BJ (cell line): ENCODE measurements at regions of chr10 and their contacts with region 1.

Region 1: GRCh38 chr10:26725837-26726727 is 28.6 kb downstream of the PDSS1 start:
- DNase-seq: no peak
- H3K4me3 ChIP-seq: no peak overlapping the region
- H3K27me3 ChIP-seq: no peaks in the 10 kb centered on the region
- CTCF ChIP-seq: peak; percentile 76

Region 2: DNA sequence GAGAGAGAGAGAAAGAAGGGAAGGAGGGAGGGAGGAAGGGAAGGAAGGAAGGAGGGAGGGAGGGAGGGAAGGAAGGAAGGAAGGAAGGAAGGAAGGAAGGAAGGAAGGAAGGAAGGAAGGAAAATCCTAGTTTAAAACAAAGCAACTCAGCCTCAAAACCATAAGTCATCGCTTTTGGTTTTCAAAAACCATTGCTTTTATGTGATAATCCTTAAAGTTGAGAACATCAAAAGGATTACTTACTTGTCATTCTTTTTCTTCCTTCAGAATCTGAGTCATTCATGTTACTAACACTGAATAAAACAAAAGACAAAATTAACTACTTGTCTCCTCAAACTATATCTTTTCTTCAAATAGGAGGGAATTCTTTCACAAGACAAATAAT is 50.2 kb before region 1 on chr10:
- CTCF ChIA-PET with region 1: no interaction called
- POLR2A ChIA-PET with region 1: no interaction called
- DNase-seq: no peak
- H3K4me3 ChIP-seq: no peak overlapping the region
- H3K27me3 ChIP-seq: no peaks in the 10 kb centered on the region
- CTCF ChIP-seq: no peak

Region 3: GRCh38 chr10:26737730-26738129 is 11.6 kb after region 1 on chr10:
- CTCF ChIA-PET with region 1: interaction called, 21 read pairs
- POLR2A ChIA-PET with region 1: no interaction called
- DNase-seq: no peak
- H3K4me3 ChIP-seq: no peak overlapping the region
- H3K27me3 ChIP-seq: no peaks in the 10 kb centered on the region
- CTCF ChIP-seq: no peak

Region 4: DNA sequence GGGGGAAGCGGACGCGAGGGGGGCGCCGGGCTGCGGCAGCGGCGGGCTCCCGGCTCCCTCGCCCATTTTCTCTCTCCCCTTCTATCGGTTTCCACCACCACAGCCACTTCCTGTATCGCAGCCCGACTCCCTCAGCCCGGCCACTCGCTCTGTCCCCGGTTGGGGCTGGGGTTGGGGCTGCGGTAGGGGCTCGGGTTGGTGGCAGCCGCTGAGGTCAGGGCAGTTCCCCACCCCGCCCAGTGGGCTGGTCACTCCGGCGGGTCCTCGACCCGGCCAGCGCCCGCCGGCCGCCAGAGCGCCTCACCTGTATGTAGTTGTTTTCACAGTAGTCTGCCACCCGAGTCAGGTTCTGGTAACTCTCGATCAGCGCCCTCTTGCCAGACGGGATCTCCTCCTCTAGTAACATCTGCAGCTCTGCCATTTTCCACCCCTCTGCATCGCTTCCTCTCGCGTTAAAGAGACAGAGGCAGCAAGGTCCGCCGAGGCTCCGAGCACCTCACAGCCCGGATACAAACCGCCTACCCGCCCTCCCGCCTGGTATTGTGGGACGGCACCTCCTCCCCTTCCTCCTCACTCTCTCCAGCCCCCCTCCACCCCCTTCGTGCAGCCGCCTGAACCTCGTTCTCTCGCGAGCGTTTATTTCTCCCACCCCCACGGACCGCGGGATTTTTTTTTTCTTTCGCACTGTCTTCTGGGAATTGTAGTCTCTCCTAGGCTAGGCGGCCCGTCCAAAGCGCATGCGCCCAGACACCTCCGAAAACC is 134.5 kb after region 1 on chr10 and contains the start of gene ABI1:
- CTCF ChIA-PET with region 1: interaction called, 11 read pairs
- POLR2A ChIA-PET with region 1: no interaction called
- DNase-seq: peak; percentile 91
- H3K4me3 ChIP-seq: peak within 1 kb of the TSS; percentile 93
- H3K27me3 ChIP-seq: no peaks in the 10 kb centered on the region; the same call in 1 of the 2 replicates
- CTCF ChIP-seq: no peak
- polyA plus RNA-seq, gene ABI1: 67.0 and 71.1 TPM in 2 replicates